T-cell (primary cell): ENCODE measurements at regions of chr5 and their contacts with region 1.

Region 1: GRCh38 chr5:168219515-168220410 is 71.7 kb upstream of the WWC1 start:
- DNase-seq: peak in 13 of 35 experiments; percentile 1 to 75 (median 13)
- ATAC-seq: peak in 1 of 4 experiments; percentile 46
- H3K4me3 ChIP-seq: no peak overlapping the region
- H3K4me3 Mint-ChIP-seq: no peak overlapping the region
- H3K27ac ChIP-seq: no peak overlapping the region
- H3K27ac Mint-ChIP-seq: no peak overlapping the region
- H3K4me1 ChIP-seq: no peaks in the 10 kb centered on the region
- H3K4me1 Mint-ChIP-seq: peaks cover 0 to 10% (median 6%) of the 10 kb centered on the region in 3 donors
- H3K27me3 ChIP-seq: peaks cover 0 to 3% of the 10 kb centered on the region in 2 experiments
- H3K27me3 Mint-ChIP-seq: peaks cover 3 to 11% of the 10 kb centered on the region in 2 donors

Region 2: DNA sequence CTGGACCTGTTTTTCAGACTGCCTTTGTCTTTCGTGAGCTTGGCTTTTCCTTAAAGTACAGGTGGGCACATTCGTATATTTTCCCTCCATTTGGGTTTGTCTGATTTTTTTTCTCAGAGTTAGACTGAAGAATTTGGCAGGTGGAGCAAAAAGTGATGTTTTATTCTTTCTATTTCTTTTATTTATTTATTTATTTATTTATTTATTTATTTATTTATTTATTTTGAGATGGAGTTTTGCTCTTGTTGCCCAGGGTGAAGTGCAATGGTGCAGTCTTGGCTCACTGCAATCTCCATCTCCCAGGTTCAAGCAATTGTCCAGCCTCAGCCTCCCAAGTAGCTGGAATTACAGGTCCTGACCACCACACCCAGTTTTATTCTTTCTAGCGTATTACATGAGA is 1733.4 kb before region 1 on chr5:
- CTCF ChIA-PET with region 1: interaction called in 1 of 2 experiments, 11 read pairs
- POLR2A ChIA-PET with region 1: no interaction called
- DNase-seq: no peak
- ATAC-seq: no peak
- H3K4me3 ChIP-seq: no peak overlapping the region
- H3K4me3 Mint-ChIP-seq: no peak overlapping the region
- H3K27ac ChIP-seq: no peak overlapping the region
- H3K27ac Mint-ChIP-seq: no peak overlapping the region
- H3K4me1 ChIP-seq: no peaks in the 10 kb centered on the region
- H3K4me1 Mint-ChIP-seq: no peaks in the 10 kb centered on the region
- H3K27me3 ChIP-seq: no peaks in the 10 kb centered on the region
- H3K27me3 Mint-ChIP-seq: no peaks in the 10 kb centered on the region

Region 3: GRCh38 chr5:167723254-167723871 is 496.4 kb before region 1 on chr5:
- CTCF ChIA-PET with region 1: interaction called in 1 of 2 experiments, 46 read pairs
- POLR2A ChIA-PET with region 1: no interaction called
- DNase-seq: peak in 33 of 35 experiments; percentile 2 to 75 (median 31)
- ATAC-seq: peak; percentile 48 to 69 (median 62)
- H3K4me3 ChIP-seq: no peak overlapping the region
- H3K4me3 Mint-ChIP-seq: no peak overlapping the region
- H3K27ac ChIP-seq: no peak overlapping the region
- H3K27ac Mint-ChIP-seq: no peak overlapping the region
- H3K4me1 ChIP-seq: no peaks in the 10 kb centered on the region
- H3K4me1 Mint-ChIP-seq: peaks cover 0 to 5% (median 3%) of the 10 kb centered on the region in 3 donors
- H3K27me3 ChIP-seq: peaks cover 0 to 5% of the 10 kb centered on the region in 2 experiments
- H3K27me3 Mint-ChIP-seq: peaks cover 0 to 5% of the 10 kb centered on the region in 2 donors

Region 4: DNA sequence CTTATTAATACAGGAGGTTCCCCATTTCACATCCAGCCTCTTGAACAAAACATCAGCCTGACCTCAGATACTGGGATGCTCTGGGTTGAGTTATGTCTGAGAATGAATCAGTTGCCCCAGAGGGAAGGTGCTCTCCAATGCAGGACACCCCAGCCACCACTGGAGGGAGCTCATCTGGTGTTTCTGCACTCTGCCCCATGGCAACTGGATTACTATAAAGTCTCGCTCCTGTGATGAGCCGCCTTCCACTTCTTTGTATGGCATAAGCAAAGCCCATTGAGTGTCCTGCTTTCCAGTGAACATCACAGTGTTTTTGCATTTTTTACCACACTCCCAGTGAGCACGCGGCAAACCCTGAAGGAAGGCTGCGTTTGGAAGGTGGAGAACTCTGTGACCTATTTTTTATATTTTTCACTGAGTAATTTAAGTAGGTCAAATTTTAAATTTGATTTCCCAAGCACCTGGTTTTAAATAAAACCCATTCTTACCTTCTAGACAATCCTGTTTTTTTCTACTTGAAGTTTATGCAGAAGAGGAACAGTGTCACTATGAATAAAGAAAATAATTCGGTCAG is 105.2 kb before region 1 on chr5:
- CTCF ChIA-PET with region 1: interaction called, 3 to 14 read pairs
- POLR2A ChIA-PET with region 1: no interaction called
- DNase-seq: peak in 16 of 35 experiments; percentile 2 to 45 (median 14)
- ATAC-seq: no peak
- H3K4me3 ChIP-seq: no peak overlapping the region
- H3K4me3 Mint-ChIP-seq: no peak overlapping the region
- H3K27ac ChIP-seq: no peak overlapping the region
- H3K27ac Mint-ChIP-seq: no peak overlapping the region
- H3K4me1 ChIP-seq: no peaks in the 10 kb centered on the region
- H3K4me1 Mint-ChIP-seq: peaks cover 0 to 2% (median 0%) of the 10 kb centered on the region in 3 donors
- H3K27me3 ChIP-seq: peaks cover 0 to 3% of the 10 kb centered on the region in 2 experiments
- H3K27me3 Mint-ChIP-seq: peaks cover 0 to 2% of the 10 kb centered on the region in 2 donors

Region 5: DNA sequence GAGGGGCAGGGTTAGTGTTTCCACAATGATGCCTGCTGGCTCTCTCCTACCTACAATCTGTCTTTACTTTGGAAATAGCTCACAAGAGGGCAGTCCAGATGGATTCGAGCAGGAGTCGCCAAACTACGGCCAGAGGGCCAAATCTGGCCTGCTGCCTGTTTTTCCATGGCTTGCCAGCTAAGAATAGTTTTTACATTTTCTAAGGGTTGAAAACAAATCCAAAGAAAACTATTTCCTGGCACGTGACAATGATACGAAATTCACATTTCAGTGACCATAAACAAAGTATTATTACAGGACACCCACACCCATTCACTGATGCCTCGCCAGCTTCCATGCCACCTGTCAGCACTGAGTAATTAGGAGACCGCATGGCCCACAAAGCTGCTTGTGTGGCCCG is 91.2 kb before region 1 on chr5:
- CTCF ChIA-PET with region 1: interaction called in 1 of 2 experiments, 14 read pairs
- POLR2A ChIA-PET with region 1: no interaction called
- DNase-seq: no peak
- ATAC-seq: no peak
- H3K4me3 ChIP-seq: no peak overlapping the region
- H3K4me3 Mint-ChIP-seq: no peak overlapping the region
- H3K27ac ChIP-seq: no peak overlapping the region
- H3K27ac Mint-ChIP-seq: no peak overlapping the region
- H3K4me1 ChIP-seq: no peaks in the 10 kb centered on the region
- H3K4me1 Mint-ChIP-seq: no peaks in the 10 kb centered on the region
- H3K27me3 ChIP-seq: no peaks in the 10 kb centered on the region
- H3K27me3 Mint-ChIP-seq: peaks cover 0 to 4% of the 10 kb centered on the region in 2 donors

Region 6: DNA sequence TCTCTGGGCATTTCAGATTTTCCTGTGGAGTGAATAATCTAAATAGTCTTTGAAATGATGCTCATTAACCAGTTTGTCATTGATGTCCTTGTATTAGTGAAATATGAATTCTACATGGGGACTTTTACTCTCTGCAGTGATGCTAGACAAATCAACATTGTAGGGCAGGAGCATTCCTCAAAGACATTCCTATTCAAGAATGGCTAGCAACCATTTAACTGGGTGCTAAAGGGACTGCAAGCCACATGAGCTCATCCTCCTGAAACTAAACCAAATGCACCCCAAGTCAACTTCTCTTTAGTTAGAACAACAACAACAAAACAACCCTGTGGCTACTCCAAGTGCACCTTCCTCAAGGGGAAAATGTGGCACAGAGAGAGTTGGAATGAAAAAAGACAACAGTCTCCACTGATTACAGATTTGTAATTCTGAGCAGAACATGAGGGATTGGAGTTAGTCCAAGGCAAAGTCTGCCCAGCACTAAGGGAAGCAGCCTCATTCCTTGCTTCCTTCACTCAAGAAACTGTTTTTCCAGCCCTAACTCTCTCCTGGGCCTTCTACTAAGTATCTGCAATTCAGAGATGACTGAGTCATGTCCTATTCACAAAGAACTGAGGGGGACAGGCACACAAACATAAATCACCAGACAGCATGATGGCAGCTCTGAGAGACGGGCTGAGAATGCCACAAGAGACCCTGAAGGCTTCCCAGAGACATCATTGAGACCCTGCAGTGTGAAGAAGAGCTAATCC is 10.3 kb before region 1 on chr5:
- CTCF ChIA-PET with region 1: interaction called in 1 of 2 experiments, 17 read pairs
- POLR2A ChIA-PET with region 1: interaction called in 1 of 2 experiments, 5 read pairs
- DNase-seq: no peak
- ATAC-seq: no peak
- H3K4me3 ChIP-seq: no peak overlapping the region
- H3K4me3 Mint-ChIP-seq: no peak overlapping the region
- H3K27ac ChIP-seq: no peak overlapping the region
- H3K27ac Mint-ChIP-seq: no peak overlapping the region
- H3K4me1 ChIP-seq: no peaks in the 10 kb centered on the region
- H3K4me1 Mint-ChIP-seq: no peaks in the 10 kb centered on the region
- H3K27me3 ChIP-seq: no peaks in the 10 kb centered on the region
- H3K27me3 Mint-ChIP-seq: peaks cover 3 to 5% of the 10 kb centered on the region in 2 donors

Region 7: GRCh38 chr5:168244838-168245559 is 25.2 kb after region 1 on chr5:
- CTCF ChIA-PET with region 1: no interaction called
- POLR2A ChIA-PET with region 1: no interaction called
- DNase-seq: no peak
- ATAC-seq: no peak
- H3K4me3 ChIP-seq: no peak overlapping the region
- H3K4me3 Mint-ChIP-seq: no peak overlapping the region
- H3K27ac ChIP-seq: no peak overlapping the region
- H3K27ac Mint-ChIP-seq: no peak overlapping the region
- H3K4me1 ChIP-seq: no peaks in the 10 kb centered on the region
- H3K4me1 Mint-ChIP-seq: no peaks in the 10 kb centered on the region
- H3K27me3 ChIP-seq: no peaks in the 10 kb centered on the region
- H3K27me3 Mint-ChIP-seq: peaks cover 4% of the 10 kb centered on the region in 2 donors

Region 8: DNA sequence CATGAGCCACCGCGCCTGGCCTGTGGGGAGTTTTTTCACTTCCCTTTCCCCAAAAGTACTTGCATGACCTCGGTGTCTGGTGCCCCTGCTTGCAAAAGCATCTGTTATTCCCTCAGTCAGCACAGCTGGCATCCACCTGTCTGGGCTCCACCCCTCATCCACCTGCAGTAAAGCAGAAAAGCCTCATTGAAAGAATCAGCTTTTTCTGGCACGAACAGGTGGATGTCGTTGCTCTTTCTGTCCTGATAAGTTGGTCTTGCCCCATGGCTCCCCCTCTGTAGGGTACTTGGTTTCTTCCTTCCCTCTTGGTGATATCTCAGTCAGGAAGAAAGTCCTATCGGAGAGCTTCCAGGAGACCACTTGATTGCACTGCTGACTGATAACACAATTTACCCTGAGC is 109.1 kb after region 1 on chr5:
- CTCF ChIA-PET with region 1: interaction called in 1 of 2 experiments, 12 read pairs
- POLR2A ChIA-PET with region 1: no interaction called
- DNase-seq: no peak
- ATAC-seq: no peak
- H3K4me3 ChIP-seq: no peak overlapping the region
- H3K4me3 Mint-ChIP-seq: no peak overlapping the region
- H3K27ac ChIP-seq: no peak overlapping the region
- H3K27ac Mint-ChIP-seq: no peak overlapping the region
- H3K4me1 ChIP-seq: no peaks in the 10 kb centered on the region
- H3K4me1 Mint-ChIP-seq: peaks cover 3 to 9% (median 6%) of the 10 kb centered on the region in 3 donors
- H3K27me3 ChIP-seq: peaks cover 0 to 15% of the 10 kb centered on the region in 2 experiments
- H3K27me3 Mint-ChIP-seq: peaks cover 20 to 21% of the 10 kb centered on the region in 2 donors